Colonic mucosa (tissue), 4 donors: ENCODE measurements at regions of chr2 and their contacts with region 1.

Region 1: GRCh38 chr2:135913727-135914365 is 37.6 kb upstream of the MCM6 start:
- DNase-seq: peak; percentile 35
- H3K4me3 ChIP-seq: no peak overlapping the region
- H3K27ac ChIP-seq: no peak overlapping the region
- H3K4me1 ChIP-seq: no peaks in the 10 kb centered on the region
- H3K27me3 ChIP-seq: no peaks in the 10 kb centered on the region
- CTCF ChIP-seq: peak; percentile 69

Region 2: DNA sequence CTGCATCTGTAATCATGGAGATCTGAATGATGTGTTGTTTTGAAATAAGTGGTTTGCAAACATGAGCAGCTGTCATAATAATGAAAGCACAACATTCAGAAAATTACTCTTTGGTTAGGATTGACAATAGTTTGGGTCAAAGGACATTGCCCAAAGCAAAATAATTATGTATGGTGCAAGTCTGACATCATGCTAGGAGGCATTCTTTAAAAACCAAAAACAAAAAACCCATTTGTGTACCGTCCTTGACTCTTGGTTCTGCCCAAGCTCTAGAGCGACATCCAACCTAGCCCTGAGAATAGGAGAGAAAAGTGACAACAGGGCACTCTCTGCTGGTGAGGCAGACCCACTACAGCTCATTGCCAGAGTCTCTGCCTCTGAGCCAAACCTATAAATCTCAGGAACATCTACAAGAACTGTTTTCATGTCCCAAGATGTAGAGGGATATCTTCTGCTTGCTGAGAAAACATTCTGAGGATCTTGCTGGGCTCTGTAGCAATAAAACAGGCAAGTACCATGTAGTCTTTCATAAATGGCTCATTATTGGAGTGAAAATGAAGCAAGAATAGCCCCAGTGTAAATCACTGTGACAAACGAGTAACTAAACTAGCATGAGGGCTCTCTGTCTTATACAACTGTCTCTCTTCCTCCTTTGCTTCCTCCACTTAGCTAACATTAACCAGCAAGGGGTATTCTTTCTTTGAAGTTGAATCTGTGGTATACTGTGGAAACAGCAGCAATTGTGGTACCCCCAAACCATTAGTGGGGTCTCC is 470.9 kb after region 1 on chr2:
- intact Hi-C with region 1: loop called (anchors 5 kb)
- DNase-seq: peak; percentile 27
- H3K4me3 ChIP-seq: no peak overlapping the region
- H3K27ac ChIP-seq: no peak overlapping the region
- H3K4me1 ChIP-seq: no peaks in the 10 kb centered on the region
- H3K27me3 ChIP-seq: no peaks in the 10 kb centered on the region
- CTCF ChIP-seq: peak; percentile 40